Left cardiac atrium (tissue), 4 donors: ENCODE measurements at regions of chr16 and their contacts with region 1.

Region 1: GRCh38 chr16:88941913-88942909 is 34.8 kb downstream of the CBFA2T3 start:
- DNase-seq: peak; percentile 61
- ATAC-seq: peak; percentile 38 to 58

Region 2: DNA sequence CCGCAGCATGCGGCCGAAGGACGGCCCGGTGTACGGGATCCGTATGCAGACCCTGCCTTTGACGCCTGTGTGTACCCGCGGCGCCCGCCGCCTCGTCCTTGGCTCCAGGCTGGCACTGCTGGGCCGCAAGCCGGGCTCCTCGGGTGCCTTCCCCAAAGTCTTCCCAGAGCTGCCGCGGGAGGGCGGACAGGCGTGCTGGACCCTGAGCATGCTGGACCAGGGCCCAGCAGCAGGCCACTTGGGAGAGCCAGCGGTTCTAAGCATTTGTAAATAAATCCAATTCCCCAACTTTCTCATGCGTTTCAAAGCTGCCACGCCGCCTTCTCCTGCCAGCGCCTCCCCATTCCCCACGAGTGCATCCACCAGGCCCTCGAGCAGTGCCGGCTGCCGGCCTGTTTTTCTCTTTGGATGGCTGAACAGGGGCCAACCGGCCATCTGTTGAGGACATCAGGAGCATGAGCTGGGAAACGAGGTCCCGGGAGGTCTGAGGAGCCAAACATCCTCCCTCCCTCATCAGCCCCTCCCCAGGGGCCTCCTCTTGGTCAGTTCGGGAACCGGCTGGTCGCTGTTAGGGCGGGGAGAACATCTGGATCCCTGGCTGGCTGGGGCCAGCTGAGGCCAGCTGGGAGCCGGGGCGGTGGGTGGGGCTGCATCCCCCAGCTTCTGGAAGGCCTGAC is 55.2 kb before region 1 on chr16:
- intact Hi-C with region 1: loop called in 1 of 2 experiments (anchors 10 kb)
- DNase-seq: peak; percentile 85
- ATAC-seq: peak; percentile 82 to 84

Region 3: GRCh38 chr16:89093602-89094251 is 151.5 kb after region 1 on chr16 and contains the start of gene ACSF3:
- intact Hi-C with region 1: loop called in 1 of 2 experiments (anchors 10 kb)
- DNase-seq: peak; percentile 75
- ATAC-seq: peak; percentile 89 to 90
- total RNA-seq, gene ACSF3: 14.9 to 16.2 TPM

Region 4: DNA sequence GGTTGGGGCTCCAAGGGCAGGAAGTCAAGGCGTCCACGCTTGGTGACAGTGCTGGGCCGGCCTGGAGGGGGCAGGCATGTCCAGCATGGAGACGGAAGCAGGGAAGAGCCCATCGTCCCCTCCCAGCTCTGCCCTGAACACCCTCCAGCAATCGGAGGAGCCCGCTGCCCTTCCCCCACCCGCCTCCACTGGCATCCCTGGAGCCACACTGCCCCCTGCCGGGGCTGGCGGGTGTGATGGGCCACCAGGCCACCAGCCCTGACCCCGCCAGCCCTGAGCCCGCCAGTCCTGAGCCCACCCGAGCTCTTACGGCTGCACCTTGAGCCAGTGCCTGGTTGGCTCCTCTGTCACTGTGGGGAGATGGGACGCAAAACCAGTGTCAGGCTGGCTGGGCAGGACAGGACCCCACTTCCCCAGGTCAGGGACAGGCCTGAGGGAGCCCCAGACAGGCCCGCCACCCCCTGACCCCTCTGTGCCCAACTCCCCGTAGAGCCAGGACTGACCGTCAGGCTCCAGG is 225.3 kb after region 1 on chr16:
- intact Hi-C with region 1: loop called (anchors 5 to 10 kb)
- DNase-seq: peak; percentile 86
- ATAC-seq: peak; percentile 57 to 58

Region 5: GRCh38 chr16:89217388-89218191 is 275.4 kb after region 1 on chr16 and contains the start of gene ZNF778:
- intact Hi-C with region 1: loop called in 1 of 2 experiments (anchors 2 kb)
- DNase-seq: peak; percentile 88
- ATAC-seq: peak; percentile 96 to 97
- total RNA-seq, gene ZNF778: 7.5 to 9.8 TPM

Region 6: GRCh38 chr16:89300311-89300975 is 358.2 kb after region 1 on chr16:
- intact Hi-C with region 1: no loop called
- DNase-seq: peak; percentile 71
- ATAC-seq: peak; percentile 45 to 81